MCF 10A (cell line): ENCODE measurements at regions of chr1 and their contacts with region 1.

Region 1: DNA sequence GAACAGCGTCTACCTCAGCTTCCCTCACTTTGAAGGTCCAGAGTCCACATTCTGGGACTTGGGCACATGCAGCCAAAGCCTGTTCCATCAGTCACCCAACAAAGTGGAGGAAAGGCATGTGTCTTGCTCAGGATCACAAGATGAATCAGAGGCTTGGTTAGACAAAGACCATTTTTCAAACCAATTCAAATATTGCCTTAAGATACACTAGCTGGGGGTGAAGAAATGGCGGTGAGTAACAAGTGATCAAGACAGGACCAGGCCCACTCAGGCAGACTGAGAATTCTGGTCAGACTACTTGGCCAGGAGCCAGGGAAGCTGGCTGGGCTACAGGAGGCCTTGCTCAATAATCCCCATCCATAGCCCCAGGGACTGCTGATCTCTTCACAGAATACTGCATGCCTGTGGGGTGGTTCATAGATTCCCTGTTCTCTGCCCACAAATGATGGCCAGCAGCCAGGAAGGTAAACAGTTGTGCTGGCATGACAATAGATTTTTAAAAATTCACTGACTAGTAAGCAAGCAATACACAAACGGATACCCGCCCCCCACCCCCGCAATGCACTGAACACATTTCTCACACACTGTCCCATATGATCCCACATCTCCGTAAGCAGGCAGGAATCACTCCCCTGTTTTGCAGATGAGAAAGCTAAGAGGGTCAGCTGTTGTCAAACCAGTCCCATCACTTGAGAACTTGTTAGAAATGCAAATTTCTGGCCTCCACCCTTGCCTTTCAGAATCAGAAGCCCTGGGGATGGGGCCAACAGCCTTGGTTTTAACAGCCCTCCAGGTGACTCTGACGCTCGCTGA is 27.2 kb downstream of the ERI3 start:
- DNase-seq: peak; percentile 100
- H3K4me3 Mint-ChIP-seq: no peak overlapping the region
- H3K27ac Mint-ChIP-seq: peak overlapping the region; percentile 82
- H3K4me1 Mint-ChIP-seq: peaks cover 61% of the 10 kb centered on the region
- H3K27me3 Mint-ChIP-seq: no peaks in the 10 kb centered on the region
- CTCF ChIP-seq: no peak

Region 2: DNA sequence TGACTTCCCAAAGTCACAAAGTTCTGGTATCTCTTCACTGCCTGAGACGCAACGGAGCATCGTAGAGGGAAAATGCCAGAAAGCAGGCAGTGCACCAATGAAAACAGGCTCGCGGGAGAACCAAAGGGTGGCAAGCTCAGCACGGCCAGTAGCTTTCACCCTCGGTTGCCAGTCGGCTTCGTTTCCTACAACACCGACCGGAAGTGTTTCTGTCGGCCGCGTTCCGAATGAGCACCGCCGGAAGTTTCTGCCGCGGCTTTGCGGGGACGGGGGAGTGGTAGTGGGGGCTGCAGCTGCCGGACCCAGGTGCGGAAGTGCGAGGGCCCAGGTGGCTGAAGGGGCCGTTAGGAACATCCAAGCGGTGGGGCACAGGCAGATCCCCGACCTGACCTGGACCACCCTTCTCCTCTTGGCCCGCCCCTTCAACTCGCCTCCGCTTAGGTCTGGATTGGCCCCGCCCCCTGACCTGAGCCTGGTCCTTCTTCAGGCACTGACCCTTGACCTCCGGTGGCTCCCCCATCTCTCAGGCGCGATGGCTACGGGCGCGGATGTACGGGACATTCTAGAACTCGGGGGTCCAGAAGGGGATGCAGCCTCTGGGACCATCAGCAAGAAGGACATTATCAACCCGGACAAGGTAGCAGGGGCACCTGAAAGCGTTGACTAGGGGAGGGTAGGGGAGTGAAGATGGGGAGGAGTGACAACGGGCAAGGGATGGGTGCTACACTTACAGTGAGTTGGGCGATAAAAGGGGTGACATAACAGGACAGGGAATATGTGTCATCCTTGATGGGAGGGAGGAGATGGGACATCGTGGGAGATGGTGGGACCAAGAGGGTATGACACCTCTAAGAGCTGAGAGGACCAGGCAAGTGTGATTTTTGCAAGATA is 114.4 kb before region 1 on chr1 and contains the start of gene DMAP1:
- CTCF ChIA-PET with region 1: interaction called, 5 read pairs
- POLR2A ChIA-PET with region 1: interaction called, 4 read pairs
- intact Hi-C with region 1: loop called (anchors 5 kb)
- DNase-seq: peak; percentile 80
- H3K4me3 Mint-ChIP-seq: peak within 1 kb of the TSS; percentile 82
- H3K27ac Mint-ChIP-seq: peak within 1 kb of the TSS; percentile 80
- H3K4me1 Mint-ChIP-seq: peaks cover 25% of the 10 kb centered on the region
- H3K27me3 Mint-ChIP-seq: no peaks in the 10 kb centered on the region
- CTCF ChIP-seq: no peak
- total RNA-seq, gene DMAP1: 36.6 and 38.5 TPM in 2 replicates

Region 3: DNA sequence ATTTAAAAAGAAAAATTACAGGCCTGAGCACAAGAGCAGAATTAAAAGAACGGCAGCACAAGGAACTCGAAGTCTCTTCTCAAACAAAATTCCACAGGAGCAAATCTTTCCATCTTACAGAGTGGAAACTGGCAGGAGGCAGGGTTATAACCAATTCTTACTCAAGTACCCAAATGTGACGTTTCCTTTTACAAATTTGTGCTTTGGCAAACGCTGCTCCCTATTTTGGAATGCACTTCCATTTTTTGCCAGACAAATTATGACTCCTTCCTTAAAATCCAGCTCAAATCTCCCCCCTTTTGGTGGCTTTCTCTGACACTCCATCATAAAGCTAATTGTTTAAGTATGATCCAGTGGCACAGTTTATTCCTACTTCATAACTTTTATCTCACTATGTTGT is 19.4 kb after region 1 on chr1:
- CTCF ChIA-PET with region 1: interaction called, 4 read pairs
- POLR2A ChIA-PET with region 1: interaction called, 41 read pairs
- intact Hi-C with region 1: no loop called
- DNase-seq: no peak
- H3K4me3 Mint-ChIP-seq: no peak overlapping the region
- H3K27ac Mint-ChIP-seq: peak overlapping the region; percentile 46
- H3K4me1 Mint-ChIP-seq: peaks cover 35% of the 10 kb centered on the region
- H3K27me3 Mint-ChIP-seq: no peaks in the 10 kb centered on the region
- CTCF ChIP-seq: no peak

Region 4: DNA sequence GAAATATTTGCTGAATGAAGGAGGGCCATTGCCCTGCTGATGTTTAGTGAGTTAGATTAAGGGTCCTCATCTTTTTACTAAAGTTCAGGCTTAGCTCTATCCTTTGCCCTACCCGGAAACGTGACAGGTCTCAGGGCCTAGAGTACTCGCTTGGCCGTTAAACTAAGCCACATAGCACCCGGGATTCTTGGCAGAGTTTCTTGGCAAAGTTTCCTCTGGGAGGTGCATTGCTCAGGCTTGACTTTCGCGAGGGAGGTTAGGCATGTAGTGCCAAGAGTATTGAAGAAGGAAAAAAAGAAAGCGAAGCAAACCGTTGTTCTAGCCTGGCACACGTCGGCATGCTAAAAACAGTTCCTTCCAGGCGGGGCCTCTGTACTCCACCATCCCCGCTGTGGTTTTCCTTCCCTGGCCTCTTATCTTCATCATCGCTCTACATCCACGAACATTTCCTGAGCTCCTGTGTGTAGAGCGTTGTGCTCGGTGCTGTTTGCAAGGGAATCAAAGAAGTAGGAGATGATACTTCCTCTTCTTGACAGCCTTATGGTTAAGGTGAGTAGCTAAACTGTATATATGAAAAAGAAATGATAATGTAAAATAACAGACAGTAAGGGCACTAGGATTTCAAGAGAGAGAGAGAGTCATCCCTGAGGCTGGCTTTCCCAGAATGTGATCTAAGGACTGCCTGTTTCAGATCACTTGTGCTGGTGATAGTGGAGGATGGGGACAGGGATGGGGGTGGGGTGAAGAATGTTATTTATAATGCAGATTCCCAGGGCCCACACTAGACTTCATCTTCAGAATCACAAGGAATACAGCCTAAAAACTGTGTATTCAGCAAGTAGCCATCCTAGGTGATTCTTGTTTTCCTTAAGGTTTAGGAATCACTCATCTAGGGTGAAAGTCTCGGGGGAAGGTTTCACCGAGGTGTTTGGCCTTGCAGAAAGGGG is 96.0 kb after region 1 on chr1:
- CTCF ChIA-PET with region 1: no interaction called
- POLR2A ChIA-PET with region 1: interaction called, 26 read pairs
- intact Hi-C with region 1: no loop called
- DNase-seq: peak; percentile 98
- H3K4me3 Mint-ChIP-seq: peak overlapping the region; percentile 73
- H3K27ac Mint-ChIP-seq: peak overlapping the region; percentile 89
- H3K4me1 Mint-ChIP-seq: peaks cover 36% of the 10 kb centered on the region
- H3K27me3 Mint-ChIP-seq: no peaks in the 10 kb centered on the region
- CTCF ChIP-seq: no peak

Region 5: DNA sequence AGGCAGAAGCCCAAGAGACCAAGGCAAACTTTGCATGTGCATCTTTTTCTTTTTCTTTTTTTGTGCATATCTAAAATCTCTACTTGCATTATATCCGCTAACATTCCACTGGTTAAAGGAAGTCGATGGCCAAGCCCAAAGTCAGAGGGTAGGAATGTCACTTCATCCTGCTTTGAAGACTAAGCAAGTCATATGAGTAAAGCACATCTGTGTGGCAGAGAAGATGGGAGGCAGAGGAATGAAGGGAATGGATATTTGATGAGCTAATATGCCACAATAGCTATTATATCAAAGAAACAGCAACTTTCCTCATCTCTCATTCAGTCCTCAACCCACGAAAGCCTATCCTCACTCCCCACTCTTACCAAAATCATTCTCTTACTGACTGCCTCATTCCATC is 136.5 kb after region 1 on chr1:
- CTCF ChIA-PET with region 1: no interaction called
- POLR2A ChIA-PET with region 1: no interaction called
- intact Hi-C with region 1: no loop called
- DNase-seq: no peak
- H3K4me3 Mint-ChIP-seq: no peak overlapping the region
- H3K27ac Mint-ChIP-seq: no peak overlapping the region
- H3K4me1 Mint-ChIP-seq: peaks cover 6% of the 10 kb centered on the region
- H3K27me3 Mint-ChIP-seq: no peaks in the 10 kb centered on the region
- CTCF ChIP-seq: no peak

Region 6: DNA sequence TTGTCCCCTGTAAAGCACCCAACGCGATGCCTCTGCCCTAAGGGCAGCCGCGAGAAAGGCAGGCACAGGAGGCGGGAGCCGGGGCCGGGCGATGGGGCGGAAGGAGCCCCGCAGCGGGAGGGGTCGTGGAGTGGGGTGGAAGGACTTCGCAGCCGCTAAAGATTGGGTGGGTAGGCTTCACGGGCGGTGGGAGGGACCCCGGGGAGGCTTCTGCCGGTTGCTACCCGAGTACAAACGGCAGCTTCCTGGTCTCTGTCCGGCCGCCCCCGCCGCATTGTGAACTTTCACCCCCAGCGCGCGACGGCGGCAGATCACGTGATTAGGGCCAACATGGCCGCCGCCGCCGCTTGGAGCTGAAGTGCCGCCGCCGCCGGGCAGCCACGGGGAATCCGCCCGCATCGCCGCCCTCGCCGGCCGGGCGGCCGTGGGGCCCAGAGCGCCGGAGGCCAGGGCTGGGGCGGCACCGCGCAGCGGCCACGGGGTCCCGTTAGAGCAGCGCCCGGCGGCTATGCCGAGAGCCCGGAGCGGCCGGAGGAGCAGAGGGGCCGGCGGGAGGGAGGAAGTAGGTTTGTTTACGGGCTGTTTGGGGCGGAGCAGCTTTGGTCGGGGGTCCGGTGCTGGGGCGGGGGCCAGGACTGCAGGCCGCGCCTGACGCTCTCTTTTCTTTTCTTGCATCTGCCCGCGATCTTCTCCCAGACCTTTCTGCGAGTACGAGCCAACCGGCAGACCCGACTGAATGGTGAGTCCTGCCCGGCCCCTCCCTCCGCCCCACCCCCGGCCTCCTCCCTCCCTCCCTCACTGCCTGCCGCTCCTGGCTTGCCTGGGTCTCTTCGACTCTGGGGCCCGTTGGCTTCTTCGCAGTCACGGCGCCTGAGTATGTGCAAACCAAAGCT is 304.0 kb after region 1 on chr1:
- CTCF ChIA-PET with region 1: interaction called, 3 read pairs
- POLR2A ChIA-PET with region 1: interaction called, 12 read pairs
- intact Hi-C with region 1: no loop called
- DNase-seq: peak; percentile 87
- H3K4me3 Mint-ChIP-seq: peak overlapping the region; percentile 79
- H3K27ac Mint-ChIP-seq: peak overlapping the region; percentile 98
- H3K4me1 Mint-ChIP-seq: peaks cover 20% of the 10 kb centered on the region
- H3K27me3 Mint-ChIP-seq: no peaks in the 10 kb centered on the region
- CTCF ChIP-seq: no peak